Panc1 (cell line): ENCODE measurements at regions of chr14 and their contacts with region 1.

Region 1: DNA sequence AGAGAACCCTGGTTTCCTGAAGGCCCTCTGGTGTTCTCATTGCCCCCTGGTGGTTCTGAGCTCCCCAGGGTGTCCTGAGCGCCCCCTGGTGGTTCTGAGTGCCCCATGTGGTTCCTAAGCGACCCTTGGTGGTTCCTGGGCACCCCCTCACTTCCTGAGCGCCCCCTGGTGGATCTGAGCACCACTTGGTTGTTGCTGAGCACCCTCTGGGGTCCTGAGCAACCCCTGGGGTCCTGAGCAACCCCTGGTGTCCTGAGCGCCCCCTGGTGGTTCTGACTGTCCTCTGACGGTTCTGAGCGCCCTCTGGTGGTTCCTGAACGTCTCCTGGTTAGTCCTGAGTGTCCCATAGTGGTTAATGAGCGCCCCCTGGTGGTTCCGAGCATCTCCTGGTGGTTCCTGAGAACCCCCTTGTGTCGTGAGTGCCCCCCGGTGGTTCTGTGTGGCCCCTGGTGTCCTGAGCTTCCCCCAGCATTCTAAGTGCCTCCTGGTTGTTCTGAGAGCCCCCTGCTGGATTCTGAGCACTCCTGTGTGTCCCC is 568.3 kb downstream of the TMEM121 start:
- DNase-seq: no peak
- ATAC-seq: no peak
- H3K4me3 ChIP-seq: no peak overlapping the region
- H3K27ac ChIP-seq: no peak overlapping the region
- H3K4me1 ChIP-seq: no peaks in the 10 kb centered on the region
- H3K27me3 ChIP-seq: no peaks in the 10 kb centered on the region
- CTCF ChIP-seq: peak; percentile 82

Region 2: GRCh38 chr14:105989566-105990302 is 105.0 kb before region 1 on chr14:
- CTCF ChIA-PET with region 1: interaction called, 11 read pairs
- POLR2A ChIA-PET with region 1: no interaction called
- in situ Hi-C with region 1: no loop called
- intact Hi-C with region 1: no loop called
- DNase-seq: no peak
- ATAC-seq: no peak
- H3K4me3 ChIP-seq: no peak overlapping the region
- H3K27ac ChIP-seq: no peak overlapping the region
- H3K4me1 ChIP-seq: no peaks in the 10 kb centered on the region
- H3K27me3 ChIP-seq: no peaks in the 10 kb centered on the region
- CTCF ChIP-seq: no peak

Region 3: GRCh38 chr14:106436310-106436905 is 341.7 kb after region 1 on chr14:
- CTCF ChIA-PET with region 1: interaction called, 11 read pairs
- POLR2A ChIA-PET with region 1: no interaction called
- in situ Hi-C with region 1: no loop called
- intact Hi-C with region 1: no loop called
- DNase-seq: no peak
- ATAC-seq: no peak
- H3K4me3 ChIP-seq: no peak overlapping the region
- H3K27ac ChIP-seq: no peak overlapping the region
- H3K4me1 ChIP-seq: no peaks in the 10 kb centered on the region
- H3K27me3 ChIP-seq: no peaks in the 10 kb centered on the region
- CTCF ChIP-seq: peak; percentile 67